ENCODE measurements at regions of chr3 and their contacts with region 1.

Region 1: DNA sequence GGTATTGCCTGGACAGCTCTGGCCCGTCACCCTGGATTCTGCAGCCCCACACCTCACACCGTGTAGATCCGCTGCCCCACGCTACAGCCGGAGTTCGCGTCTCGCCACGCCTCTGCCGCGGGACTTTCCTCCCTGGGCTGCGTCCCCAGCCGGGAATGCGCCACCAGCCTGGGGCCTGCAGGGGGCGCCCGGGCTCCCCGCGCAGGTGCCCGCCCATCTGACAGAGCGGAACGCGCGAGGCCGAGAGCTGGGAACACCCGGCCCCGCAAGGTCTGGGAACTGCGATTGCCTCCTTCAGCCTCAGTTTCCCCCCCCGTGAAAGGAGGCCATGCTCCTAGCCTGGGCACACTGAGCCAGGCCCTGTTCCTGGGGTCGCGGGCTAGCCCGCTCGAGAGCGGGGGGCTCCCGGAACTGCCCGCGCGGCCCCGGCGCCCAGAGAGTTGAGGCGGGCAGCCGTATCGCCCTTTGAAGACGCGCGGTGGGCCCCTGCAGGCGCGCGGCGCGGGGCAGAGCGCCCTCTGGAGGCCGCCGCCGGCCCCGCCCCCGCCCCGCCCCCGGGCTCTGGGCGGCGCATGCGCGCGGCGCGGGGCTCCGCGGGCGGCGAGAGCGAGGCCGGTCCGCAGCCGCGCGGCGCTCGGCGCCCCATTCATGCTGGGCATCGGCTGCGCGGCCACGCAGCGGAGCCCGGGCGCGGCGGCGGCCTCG is at the start of gene PLXNA1:
- DNase-seq: peak; percentile 35 to 91
- H3K4me3 ChIP-seq: peak within 1 kb of the TSS; percentile 88 to 89
- H3K27ac ChIP-seq: peak within 1 kb of the TSS; percentile 77 to 84
- H3K4me1 ChIP-seq: peaks cover 11 to 38% of the 10 kb centered on the region in 2 donors
- H3K27me3 ChIP-seq: no peaks in the 10 kb centered on the region
- CTCF ChIP-seq: peak; percentile 90 to 98 (median 95)
- total RNA-seq, gene PLXNA1: 79.8 TPM

Region 2: GRCh38 chr3:126679318-126679751 is 303.3 kb before region 1 on chr3:
- intact Hi-C with region 1: loop called (anchors 2 kb)
- DNase-seq: peak in 1 of 2 donors; percentile 93
- H3K4me3 ChIP-seq: peak overlapping the region in 1 of 2 donors; percentile 37
- H3K27ac ChIP-seq: peak overlapping the region in 1 of 2 donors; percentile 45
- H3K4me1 ChIP-seq: peaks cover 5 to 22% of the 10 kb centered on the region in 2 donors
- H3K27me3 ChIP-seq: no peaks in the 10 kb centered on the region
- CTCF ChIP-seq: peak; percentile 94 to 100 (median 99)

Region 3: DNA sequence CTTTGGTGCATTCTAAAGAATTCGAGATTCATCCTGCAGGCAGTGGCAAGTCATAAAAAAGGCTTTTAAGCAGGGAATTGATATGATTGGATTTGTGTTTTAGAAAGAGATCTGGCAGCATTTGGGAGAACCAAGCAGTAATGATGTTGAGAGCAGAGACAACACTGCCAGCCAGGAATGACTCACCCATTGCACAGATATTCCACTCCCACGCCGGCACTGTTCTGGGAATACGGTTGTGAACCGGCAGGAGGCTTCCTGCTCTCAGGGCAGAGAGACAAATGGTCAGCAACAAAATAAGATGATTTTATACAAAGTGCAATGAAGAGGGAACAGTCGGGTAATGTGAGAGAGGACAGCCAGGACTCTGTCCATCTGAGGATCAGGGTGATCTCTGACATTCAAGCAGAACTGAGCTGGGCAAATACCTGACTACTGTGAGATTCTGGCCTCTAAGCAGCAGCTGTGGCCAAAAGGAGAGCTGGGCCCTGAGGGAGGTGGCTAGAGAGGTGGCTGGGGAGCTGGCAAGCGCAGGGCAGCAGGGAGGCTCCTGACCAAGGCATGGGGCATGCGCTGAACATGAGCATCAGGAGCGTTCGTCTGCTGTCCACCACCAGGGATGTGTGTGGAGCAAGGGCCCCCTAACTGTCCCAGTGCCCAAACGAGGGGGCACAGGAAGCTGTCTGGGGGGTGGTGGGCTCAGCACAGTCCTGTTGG is 55.8 kb before region 1 on chr3:
- intact Hi-C with region 1: loop called (anchors 5 kb)
- DNase-seq: peak; percentile 34 to 90
- H3K4me3 ChIP-seq: peak overlapping the region in 1 of 2 donors; percentile 9
- H3K27ac ChIP-seq: peak overlapping the region; percentile 74 to 84
- H3K4me1 ChIP-seq: peaks cover 9 to 18% of the 10 kb centered on the region in 2 donors
- H3K27me3 ChIP-seq: no peaks in the 10 kb centered on the region
- CTCF ChIP-seq: peak; percentile 10 to 30 (median 18)

Region 4: GRCh38 chr3:127015282-127016042 is 32.8 kb after region 1 on chr3:
- intact Hi-C with region 1: loop called (anchors 1 kb)
- DNase-seq: no peak
- H3K4me3 ChIP-seq: no peak overlapping the region
- H3K27ac ChIP-seq: peak overlapping the region; percentile 64 to 76
- H3K4me1 ChIP-seq: peaks cover 26 to 51% of the 10 kb centered on the region in 2 donors
- H3K27me3 ChIP-seq: no peaks in the 10 kb centered on the region
- CTCF ChIP-seq: no peak

Region 5: GRCh38 chr3:127177231-127177630 is 194.6 kb after region 1 on chr3:
- intact Hi-C with region 1: loop called (anchors 5 kb)
- DNase-seq: no peak
- H3K4me3 ChIP-seq: no peak overlapping the region
- H3K27ac ChIP-seq: no peak overlapping the region
- H3K4me1 ChIP-seq: no peaks in the 10 kb centered on the region
- H3K27me3 ChIP-seq: no peaks in the 10 kb centered on the region
- CTCF ChIP-seq: peak in 2 of 3 experiments; percentile 23 to 54